ENCODE measurements at regions of chr3 and their contacts with region 1.

Region 1: GRCh38 chr3:185983495-185984141 is 45.8 kb upstream of the TRA2B start:
- DNase-seq: peak; percentile 35 to 76
- ATAC-seq: peak; percentile 84 to 95 (median 94)
- H3K4me3 ChIP-seq: no peak overlapping the region
- H3K27ac ChIP-seq: no peak overlapping the region
- H3K4me1 ChIP-seq: peaks cover 0 to 12% (median 6%) of the 10 kb centered on the region in 9 donors
- H3K27me3 ChIP-seq: peaks cover 0 to 15% (median 6%) of the 10 kb centered on the region in 7 donors
- CTCF ChIP-seq: peak; percentile 84 to 95 (median 93)

Region 2: DNA sequence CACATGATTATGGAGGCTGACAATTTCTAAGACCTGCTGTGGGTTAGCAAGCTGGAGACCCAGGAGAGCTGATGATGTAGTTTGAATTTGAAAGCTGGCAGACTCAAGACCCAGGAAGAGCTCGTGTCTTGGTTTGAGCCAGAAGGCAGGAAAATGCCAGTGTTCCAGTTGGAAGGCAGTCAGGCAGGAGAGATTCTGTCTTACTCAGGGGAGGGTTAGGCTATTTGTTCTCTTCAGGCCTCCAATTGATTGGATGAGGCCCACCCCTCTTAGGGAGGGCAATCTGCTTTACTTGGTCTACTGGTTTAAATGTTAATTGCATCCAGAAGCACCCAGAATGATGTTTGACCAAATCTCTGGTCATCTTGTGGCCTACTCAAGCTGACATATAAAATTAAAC is 118.4 kb before region 1 on chr3:
- intact Hi-C with region 1: no loop called
- DNase-seq: no peak
- ATAC-seq: no peak
- H3K4me3 ChIP-seq: no peak overlapping the region
- H3K27ac ChIP-seq: no peak overlapping the region
- H3K4me1 ChIP-seq: no peaks in the 10 kb centered on the region
- H3K27me3 ChIP-seq: no peaks in the 10 kb centered on the region
- CTCF ChIP-seq: no peak

Region 3: GRCh38 chr3:186138272-186138981 is 154.8 kb after region 1 on chr3:
- intact Hi-C with region 1: no loop called
- DNase-seq: peak in 1 of 2 donors; percentile 31
- ATAC-seq: peak in 7 of 8 donors; percentile 31 to 82 (median 70)
- H3K4me3 ChIP-seq: no peak overlapping the region
- H3K27ac ChIP-seq: no peak overlapping the region
- H3K4me1 ChIP-seq: peaks cover 0 to 13% (median 2%) of the 10 kb centered on the region in 9 donors
- H3K27me3 ChIP-seq: no peaks in the 10 kb centered on the region
- CTCF ChIP-seq: no peak

Region 4: DNA sequence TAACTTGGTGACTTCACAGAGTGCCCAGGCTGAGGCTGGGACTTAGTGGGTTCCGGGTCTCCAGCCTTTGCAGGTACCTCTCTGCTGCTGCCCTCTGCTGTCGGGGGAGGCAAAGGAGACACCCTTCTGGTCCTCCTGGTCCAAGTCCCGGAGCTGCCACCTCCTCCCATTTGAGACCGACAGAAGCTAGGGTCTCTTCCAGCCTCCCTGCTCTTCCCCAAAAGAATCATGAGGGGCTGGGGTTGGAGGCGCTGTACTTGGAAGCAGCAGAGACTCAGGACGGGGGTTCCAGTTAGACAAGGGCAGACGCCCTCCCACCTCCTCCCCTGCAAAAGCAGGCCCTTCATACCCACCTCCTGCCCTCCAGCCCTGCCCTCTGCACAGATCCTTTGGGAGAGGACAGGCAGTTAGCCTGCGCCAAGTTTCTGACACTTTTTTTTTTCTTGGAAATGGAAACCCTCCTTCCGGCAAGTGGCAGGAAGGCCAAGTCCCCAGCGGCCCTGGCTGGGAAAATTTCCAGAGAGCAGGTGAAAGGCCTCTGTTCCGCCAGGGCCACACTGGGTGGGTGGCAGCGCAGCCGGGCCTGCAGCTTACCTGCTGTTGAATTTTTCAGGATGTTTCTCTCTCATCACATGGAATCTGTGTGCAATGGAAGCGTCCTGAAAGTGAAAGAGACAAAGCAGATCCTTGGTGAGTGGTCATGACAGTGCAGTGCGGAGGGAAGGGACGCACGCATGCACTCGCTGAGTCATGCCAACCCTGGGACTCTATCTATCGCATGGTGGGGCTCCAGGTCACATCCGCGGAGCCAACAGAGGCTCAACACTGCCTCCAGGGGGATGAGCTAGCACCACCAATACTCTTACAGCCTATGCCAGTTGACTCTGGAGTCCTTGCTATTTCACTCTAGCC is 258.5 kb after region 1 on chr3:
- intact Hi-C with region 1: loop called (anchors 1 to 10 kb)
- DNase-seq: peak; percentile 65 to 71
- ATAC-seq: peak; percentile 94 to 98 (median 95)
- H3K4me3 ChIP-seq: peak overlapping the region in 7 of 10 donors; percentile 4 to 51 (median 43)
- H3K27ac ChIP-seq: peak overlapping the region; percentile 55 to 82 (median 72)
- H3K4me1 ChIP-seq: peaks cover 6 to 41% (median 27%) of the 10 kb centered on the region in 9 donors
- H3K27me3 ChIP-seq: no peaks in the 10 kb centered on the region
- CTCF ChIP-seq: peak in 8 of 9 donors; percentile 11 to 64 (median 59)

Region 5: GRCh38 chr3:186277268-186277909 is 293.8 kb after region 1 on chr3:
- intact Hi-C with region 1: loop called in 7 of 10 experiments (anchors 2 to 10 kb)
- DNase-seq: no peak
- ATAC-seq: peak in 5 of 8 donors; percentile 45 to 69 (median 65)
- H3K4me3 ChIP-seq: no peak overlapping the region
- H3K27ac ChIP-seq: no peak overlapping the region
- H3K4me1 ChIP-seq: peaks cover 0 to 21% (median 5%) of the 10 kb centered on the region in 9 donors
- H3K27me3 ChIP-seq: no peaks in the 10 kb centered on the region
- CTCF ChIP-seq: peak in 8 of 9 donors; percentile 34 to 66 (median 54)

Region 6: DNA sequence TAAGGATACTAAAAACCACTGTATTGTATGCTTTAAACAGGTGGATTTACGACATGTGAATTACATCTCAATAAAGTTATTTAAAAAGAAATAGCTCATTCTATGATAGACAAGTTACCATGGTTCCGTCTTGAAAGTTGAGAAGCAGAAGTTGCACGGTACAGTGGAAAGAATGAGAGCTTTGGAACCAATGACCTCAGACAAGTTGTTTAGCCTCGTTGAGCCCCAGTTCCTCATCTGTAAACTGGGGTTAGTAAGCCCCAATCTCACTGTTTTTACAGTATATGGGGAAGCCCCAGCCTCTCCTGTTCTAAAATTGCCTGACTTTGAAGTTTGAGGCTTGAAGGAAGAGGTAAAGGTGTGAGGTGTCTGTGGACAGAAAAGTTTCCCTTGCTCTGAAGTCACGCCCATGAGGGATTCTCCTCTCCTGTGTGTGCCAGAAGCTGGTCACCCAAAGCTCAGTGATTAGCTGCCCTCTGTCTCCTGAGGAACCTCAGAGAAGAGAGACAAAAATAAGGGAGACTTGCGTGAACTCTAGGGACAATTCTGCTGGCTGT is 550.6 kb after region 1 on chr3:
- intact Hi-C with region 1: loop called in 2 of 10 experiments (anchors 5 kb)
- DNase-seq: no peak
- ATAC-seq: peak in 6 of 8 donors; percentile 35 to 80 (median 64)
- H3K4me3 ChIP-seq: no peak overlapping the region
- H3K27ac ChIP-seq: peak overlapping the region in 1 of 10 donors; percentile 46
- H3K4me1 ChIP-seq: peaks cover 0 to 15% (median 7%) of the 10 kb centered on the region in 9 donors
- H3K27me3 ChIP-seq: no peaks in the 10 kb centered on the region
- CTCF ChIP-seq: no peak

Region 7: DNA sequence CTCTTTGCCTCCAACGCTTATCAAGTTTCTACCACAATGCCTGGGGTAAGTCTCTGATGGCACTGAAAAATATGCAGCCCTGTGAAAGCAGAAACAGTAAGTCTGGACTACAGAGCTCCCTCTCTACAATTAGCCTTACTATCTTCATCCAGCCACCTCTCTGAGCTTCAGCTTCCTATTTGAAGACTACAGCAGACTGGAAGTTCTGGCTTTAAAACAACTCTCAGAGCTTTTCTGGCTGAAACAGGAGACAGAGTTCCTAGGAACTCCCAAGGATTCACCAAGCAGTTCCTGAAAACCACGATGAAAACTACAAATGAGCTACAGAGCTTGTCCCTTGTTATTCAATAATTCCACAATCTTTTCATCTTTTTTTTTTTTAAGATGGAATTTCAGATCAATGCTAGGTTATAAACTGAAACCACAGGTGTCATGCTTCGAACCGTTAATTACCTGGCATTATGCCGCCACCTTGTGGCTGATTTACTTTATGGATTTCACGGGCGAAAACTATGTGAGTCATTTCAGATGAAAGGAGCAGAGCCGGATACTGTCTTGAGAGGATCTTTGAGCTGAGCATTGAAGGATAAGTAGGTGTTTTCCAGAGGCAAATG is 556.7 kb after region 1 on chr3:
- intact Hi-C with region 1: loop called (anchors 1 to 5 kb)
- DNase-seq: peak in 1 of 2 donors; percentile 67
- ATAC-seq: peak in 7 of 8 donors; percentile 67 to 87 (median 82)
- H3K4me3 ChIP-seq: peak overlapping the region in 2 of 10 donors; percentile 3 to 27
- H3K27ac ChIP-seq: peak overlapping the region in 1 of 10 donors; percentile 21
- H3K4me1 ChIP-seq: peaks cover 2 to 25% (median 9%) of the 10 kb centered on the region in 9 donors
- H3K27me3 ChIP-seq: no peaks in the 10 kb centered on the region
- CTCF ChIP-seq: peak; percentile 51 to 83 (median 71)

Measured in heart right ventricle (tissue), 16 donors.